ENCODE measurements at regions of chr1 and their contacts with region 1.

Region 1: GRCh38 chr1:162023547-162024501 is at the start of gene OLFML2B:
- DNase-seq: peak; percentile 79
- ATAC-seq: peak; percentile 87 to 94
- total RNA-seq, gene OLFML2B: 5.8 to 11.4 TPM

Region 2: DNA sequence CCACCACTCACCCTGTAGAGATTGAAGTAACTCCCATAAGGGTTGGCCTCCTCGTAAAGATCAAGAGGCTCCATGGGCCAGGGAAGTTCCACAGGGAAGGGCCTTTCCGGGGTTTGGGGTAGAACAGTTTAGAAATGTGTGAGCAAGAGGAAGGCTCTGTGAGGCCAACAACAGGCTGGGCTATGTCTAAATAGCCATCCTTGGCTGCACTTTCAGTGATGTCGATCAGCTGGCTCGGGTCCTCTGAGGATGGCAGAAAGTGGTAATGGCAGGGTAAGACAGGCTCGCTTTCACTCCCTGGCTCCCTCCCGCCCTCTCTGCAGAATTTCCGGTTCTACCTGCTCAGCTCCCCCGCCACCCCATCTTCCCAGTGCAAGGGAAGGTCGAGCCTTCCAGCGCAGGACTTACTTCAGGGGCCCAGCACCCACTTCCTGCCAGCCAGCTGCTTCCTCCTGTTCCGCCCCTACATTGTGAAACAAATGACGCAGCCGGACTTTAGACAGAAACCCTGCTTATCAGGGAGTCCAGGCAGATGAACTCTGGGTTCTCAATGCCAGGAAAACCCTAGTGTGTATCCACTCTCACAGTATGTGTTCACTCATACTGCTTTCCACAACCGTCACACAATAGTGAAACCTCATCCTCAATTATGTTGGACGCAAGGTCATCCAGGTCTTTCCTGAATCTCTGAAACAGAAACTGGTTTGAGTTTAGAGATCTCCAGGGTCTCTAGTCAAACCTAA is 1010.2 kb before region 1 on chr1:
- intact Hi-C with region 1: no loop called
- DNase-seq: peak; percentile 91
- ATAC-seq: peak; percentile 94 to 97

Region 3: DNA sequence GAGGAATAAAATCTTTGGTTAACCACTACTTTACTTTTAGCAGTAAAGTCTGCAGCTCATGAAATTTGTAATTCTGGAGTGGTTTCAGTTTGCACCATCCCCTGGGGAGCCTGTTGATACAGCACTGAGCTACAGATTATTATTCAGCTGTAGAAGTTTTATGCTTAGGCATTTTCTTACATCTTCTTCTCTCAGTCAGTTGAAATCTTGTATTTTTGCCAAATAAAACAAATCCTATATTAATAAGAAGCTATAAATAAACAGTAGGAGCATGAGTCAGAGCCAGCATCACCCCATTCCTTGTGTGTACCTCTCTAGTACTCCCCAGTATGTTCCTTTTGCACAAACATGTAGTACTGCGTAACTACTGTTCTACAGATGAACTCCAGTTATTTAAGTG is 138.8 kb before region 1 on chr1:
- intact Hi-C with region 1: loop called in 1 of 2 experiments (anchors 10 kb)
- DNase-seq: no peak
- ATAC-seq: peak; percentile 66 to 70

Measured in left cardiac atrium (tissue), 4 donors.